Cardiac septum (tissue), 1 donor: ENCODE measurements at regions of chr17 and their contacts with region 1.

Region 1: DNA sequence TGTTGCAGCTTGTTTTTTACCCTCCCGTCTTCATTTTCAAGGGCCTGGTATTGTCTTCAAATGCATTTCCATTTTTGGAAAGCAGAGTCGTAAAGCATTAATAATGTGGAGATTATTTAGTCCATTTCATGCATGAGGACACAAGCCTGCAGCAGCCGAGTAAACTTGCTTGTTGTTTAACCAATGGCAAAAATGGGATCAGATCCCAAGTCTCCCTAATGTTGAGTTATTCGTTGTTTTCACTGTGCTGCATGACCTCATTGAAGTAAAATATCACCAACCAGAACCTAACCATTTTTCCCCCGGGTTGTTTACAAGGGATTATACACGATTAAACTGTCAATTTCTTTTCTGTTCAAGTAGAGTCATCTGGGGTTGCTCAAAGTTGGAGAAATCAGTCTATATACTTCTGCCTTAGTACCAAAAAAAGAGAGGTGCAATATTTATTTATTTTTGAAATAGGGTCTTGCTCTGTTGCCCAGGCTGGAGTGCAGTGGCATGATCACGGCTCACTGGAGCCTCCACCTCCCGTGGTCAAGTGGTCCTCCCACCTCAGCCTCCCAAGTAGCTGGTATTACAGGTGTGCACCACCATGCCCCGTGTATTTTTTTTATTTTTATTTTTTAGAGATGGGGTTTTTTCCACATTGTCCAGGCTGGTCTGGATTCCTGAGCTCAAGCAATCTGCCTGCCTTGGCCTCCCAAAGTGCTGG is 12.4 kb downstream of the AMZ2 start:
- DNase-seq: no peak

Region 2: DNA sequence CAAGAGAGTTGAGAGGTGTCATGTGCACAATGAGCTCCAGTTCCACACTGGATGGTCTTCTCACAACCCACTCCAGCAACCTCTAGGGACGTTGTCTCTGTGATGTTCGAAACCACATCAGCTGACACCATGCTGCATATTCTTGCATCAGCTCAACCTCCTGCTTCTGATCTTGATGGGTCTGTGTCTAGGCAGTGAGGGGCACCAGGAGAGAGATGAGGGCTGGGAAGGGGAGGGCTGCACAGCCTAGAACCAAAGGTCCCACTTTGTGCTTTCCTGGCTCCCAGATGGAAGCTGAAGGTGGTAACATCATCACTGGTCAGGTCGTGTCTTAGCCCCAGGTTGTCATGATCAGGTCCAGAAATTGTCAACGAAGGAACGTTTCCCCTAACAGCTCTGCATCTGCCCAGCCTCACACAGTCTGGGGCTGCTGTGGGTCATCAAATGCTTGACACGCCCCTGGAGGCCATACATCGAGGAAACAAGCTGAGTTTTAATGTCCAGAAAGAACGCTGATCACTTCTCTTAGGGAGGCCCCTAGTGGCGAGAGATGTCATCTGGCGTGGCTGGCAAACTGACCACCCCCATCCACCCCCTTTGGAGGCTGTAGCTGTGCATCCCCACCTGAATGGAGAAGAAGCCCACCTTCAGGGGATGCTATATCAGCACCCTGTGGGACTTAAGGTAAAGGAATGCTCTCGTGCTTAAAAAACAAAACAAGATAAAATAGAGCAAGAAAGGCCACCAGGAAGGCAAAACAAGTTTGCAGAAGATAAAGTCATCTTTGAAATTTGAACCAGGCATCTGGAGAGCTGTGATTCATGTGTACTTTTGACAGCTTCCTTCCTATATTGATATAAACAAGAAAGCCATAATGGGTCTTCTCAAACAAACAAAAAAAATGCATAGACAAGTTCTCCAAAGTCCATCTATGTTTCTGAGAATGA is 138.8 kb after region 1 on chr17:
- intact Hi-C with region 1: loop called (anchors 2 kb)
- DNase-seq: peak; percentile 81

Region 3: DNA sequence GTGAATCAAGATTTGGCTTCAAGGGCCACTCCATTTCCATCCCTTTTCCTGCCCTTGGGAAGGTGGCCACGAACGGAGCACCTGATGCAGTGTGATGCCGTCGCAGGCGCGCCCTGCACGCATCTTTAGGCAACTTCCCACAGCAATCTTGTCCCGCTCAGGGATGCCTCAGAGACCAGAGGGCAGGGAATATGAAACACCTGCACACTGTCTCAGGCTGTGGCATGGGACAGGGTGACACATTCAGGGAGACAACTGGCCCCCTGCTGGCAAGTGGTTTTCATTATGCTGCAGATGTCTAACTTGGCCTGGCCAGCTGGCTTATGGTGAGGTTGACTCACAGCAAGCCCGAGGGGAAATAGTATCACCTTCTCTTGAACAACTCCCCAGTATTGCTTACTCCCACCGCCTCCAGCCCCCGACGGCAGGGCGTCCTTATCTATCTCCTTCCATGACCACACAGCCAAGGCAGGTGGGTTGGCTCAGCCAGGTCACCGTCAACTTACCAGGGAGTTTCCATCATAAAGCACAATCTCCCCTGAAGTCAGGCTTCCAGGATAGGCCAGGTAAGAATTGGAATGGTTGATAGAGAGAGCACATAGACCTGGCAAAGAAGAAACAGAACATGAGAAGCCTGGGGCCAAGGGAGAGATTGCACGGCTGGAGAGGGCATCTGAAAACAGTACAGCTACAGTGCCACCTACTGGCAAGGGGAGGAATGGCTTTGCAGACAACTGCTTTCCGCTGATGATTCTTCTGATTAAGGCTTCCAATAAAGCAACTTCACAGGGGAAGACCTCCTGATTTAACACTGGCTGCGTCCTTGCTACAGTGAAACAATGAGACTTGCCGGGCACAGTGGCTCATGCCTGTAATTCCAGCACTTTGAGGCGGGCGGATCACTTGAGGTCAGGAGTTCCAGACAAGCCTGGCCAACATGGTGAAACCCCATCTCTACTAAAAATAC is 176.0 kb after region 1 on chr17:
- intact Hi-C with region 1: loop called (anchors 2 kb)
- DNase-seq: peak; percentile 83

Region 4: DNA sequence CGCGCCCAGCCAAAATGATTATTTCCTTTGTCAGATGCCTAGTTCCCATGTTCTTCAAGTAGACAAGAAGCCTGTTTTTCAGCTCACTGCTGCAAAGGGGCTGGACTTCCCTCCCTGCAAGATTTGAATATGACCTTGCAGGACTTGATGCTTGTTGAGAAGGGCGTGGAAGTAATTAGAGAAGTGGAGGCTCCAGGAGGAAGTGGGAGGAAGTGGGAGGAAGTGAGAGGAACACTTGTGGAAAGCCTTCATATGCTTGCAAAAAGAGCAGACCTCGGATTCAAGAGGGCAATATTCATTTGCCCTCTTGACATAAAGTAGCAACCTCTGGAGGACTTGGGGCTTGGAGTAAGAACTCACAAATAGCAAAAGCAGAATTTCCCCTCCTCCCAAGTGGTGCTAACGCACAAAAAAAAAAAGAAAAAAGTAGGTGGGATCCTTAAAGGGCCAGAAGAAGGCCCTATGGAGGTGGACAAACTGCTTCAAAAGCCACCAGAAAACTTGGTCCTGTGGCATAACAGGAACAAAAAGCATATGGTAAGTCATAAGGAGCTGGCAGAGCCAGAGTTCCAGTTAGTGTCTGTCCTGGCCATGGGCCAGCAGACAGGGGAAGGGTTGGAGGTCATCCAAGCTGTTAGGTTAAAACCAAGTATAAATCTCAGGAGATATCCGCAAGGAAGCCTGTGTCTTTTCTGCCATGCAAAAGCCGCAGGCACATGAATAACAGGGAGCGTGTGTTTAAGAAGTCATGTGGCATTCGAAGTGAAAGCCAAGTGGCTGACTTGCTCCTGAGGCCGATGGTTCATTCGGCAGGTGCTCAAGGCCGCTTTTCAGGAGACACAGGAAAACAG is 231.4 kb after region 1 on chr17:
- intact Hi-C with region 1: no loop called
- DNase-seq: peak; percentile 82

Region 5: DNA sequence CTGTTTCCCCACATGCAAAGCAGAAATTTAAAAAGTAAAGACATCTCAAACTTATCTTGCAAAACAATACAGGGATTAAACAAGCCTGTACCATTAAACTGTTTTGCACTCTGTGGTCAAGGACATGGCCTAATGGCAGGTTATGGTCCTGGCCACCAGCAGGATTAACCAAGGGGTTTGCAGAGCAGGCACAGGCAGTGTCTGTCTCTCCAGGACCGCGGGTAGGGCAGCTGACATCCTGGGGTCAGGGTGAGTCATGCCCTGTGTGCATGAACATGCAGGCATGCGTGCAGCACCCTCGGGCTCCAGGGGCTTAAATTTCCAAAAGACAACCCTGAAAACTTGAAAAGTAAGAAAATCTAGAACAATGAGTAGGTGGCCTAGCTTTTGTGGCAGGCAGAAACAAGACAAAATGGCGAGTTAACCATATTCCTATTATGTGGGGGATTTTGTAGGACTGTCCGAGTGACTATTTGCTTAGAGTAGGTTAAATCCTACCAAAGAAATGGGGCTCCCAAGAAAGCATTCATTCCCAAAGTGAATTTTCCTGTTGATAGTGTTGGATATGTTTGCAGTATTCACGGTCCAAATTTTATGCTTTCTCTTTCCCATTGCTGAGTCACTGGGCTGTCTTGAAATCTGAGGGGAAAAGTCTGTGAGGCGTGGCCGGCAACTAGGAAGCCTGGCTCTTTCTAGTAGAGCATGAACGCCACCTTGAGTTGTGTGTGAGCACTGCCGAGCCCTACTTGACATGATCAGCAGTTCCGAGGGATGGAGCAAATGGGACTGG is 499.3 kb after region 1 on chr17:
- intact Hi-C with region 1: loop called (anchors 10 kb)
- DNase-seq: peak; percentile 87